GM12878 (cell line): ENCODE measurements at regions of chr22 and their contacts with region 1.

Region 1: GRCh38 chr22:41762980-41763779 is 37.3 kb upstream of the CCDC134 start:
- DNase-seq: no peak
- ATAC-seq: peak; percentile 92
- H3K4me3 ChIP-seq: no peak overlapping the region
- H3K27ac ChIP-seq: no peak overlapping the region
- H3K4me1 ChIP-seq: no peaks in the 10 kb centered on the region
- H3K27me3 ChIP-seq: no peaks in the 10 kb centered on the region
- CTCF ChIP-seq: peak; percentile 50 to 74 (median 67); a peak in 5 of 6 replicates
- EP300 ChIP-seq: no peak
- POLR2A ChIP-seq: no peak
- RAD21 ChIP-seq: peak; percentile 62

Region 2: DNA sequence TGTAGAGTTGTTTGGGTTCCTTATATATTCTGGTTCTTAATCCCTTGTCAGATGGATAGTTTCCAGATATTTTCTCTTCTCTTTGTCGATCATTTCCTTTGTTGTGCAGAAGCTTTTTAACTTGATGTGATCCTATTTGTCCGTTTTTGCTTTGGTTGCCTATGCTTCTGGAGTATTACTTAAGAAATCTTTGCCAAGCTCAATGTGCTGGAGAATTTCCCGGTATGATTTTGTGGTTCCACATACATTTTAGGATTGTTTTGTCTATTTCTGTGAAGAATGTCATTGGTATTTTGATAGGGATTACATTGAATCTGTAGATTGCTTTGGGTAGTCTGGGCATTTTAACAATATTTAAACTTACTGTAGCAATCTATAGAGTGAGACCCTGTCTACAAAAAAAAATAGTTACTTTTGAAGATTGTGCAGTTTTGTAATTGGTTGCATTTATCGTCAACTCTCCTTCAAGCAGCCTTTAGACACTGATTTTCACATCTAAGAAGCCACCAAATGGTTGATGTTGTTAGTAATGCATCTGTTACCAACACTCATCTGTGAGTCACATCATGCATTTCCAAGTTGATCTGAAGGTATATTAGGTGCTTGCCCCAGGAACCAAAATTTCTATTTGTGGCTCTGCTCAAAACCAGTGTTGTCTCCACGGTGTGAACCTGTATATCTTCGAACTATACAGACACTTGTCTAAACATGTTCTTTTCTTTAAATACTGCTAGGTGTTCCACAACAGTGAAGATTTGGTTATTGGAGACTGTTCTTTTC is 120.7 kb before region 1 on chr22:
- CTCF ChIA-PET with region 1: no interaction called
- POLR2A ChIA-PET with region 1: no interaction called
- RAD21 ChIA-PET with region 1: no interaction called
- SMC1A ChIA-PET with region 1: no interaction called
- in situ Hi-C with region 1: no loop called
- intact Hi-C with region 1: no loop called
- DNase-seq: no peak
- ATAC-seq: no peak
- H3K4me3 ChIP-seq: no peak overlapping the region
- H3K27ac ChIP-seq: no peak overlapping the region
- H3K4me1 ChIP-seq: no peaks in the 10 kb centered on the region
- H3K27me3 ChIP-seq: no peaks in the 10 kb centered on the region
- CTCF ChIP-seq: no peak
- EP300 ChIP-seq: no peak
- POLR2A ChIP-seq: no peak
- RAD21 ChIP-seq: no peak

Region 3: GRCh38 chr22:41752011-41752970 is 10.9 kb before region 1 on chr22:
- CTCF ChIA-PET with region 1: interaction called, 65 read pairs
- POLR2A ChIA-PET with region 1: interaction called, 4 read pairs
- RAD21 ChIA-PET with region 1: interaction called, 7 read pairs
- SMC1A ChIA-PET with region 1: interaction called, 16 read pairs
- in situ Hi-C with region 1: no loop called
- intact Hi-C with region 1: no loop called
- DNase-seq: peak; percentile 66
- ATAC-seq: peak; percentile 88
- H3K4me3 ChIP-seq: peak overlapping the region; percentile 32; the same call in 1 of the 2 replicates
- H3K27ac ChIP-seq: peak overlapping the region; percentile 66
- H3K4me1 ChIP-seq: peaks cover 39% of the 10 kb centered on the region
- H3K27me3 ChIP-seq: no peaks in the 10 kb centered on the region
- CTCF ChIP-seq: no peak
- EP300 ChIP-seq: 0 out of 4 replicates have a peak, but pooled peaks of 1 of the 2 experiments have one; percentile 17
- POLR2A ChIP-seq: no peak
- RAD21 ChIP-seq: no peak